ENCODE measurements at regions of chr4 and their contacts with region 1.

Region 1: GRCh38 chr4:39044364-39044955 is 12.3 kb upstream of the TMEM156 start:
- DNase-seq: peak; percentile 95
- H3K4me3 Mint-ChIP-seq: peak overlapping the region; percentile 72
- H3K27ac Mint-ChIP-seq: peak overlapping the region; percentile 73
- H3K4me1 Mint-ChIP-seq: peaks cover 33% of the 10 kb centered on the region
- H3K27me3 Mint-ChIP-seq: no peaks in the 10 kb centered on the region
- CTCF ChIP-seq: no peak

Region 2: DNA sequence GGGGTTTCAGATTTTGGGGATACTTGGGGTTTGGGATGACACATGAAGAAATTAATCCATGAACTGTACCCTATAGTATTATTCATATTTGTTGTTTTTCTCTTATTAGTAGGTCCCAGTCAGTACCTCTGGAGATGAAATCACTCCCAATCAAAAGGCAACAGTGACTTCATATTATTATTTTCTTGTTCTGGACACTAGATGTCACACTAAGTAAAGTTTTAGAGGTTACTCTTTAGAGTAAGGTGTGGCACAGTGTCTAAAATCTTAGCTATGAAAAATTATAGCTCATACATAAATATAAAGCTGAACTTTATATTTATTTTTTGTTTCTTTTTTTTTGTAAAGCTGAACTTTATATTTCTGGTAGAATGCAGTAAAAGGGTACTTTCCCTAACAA is 141.8 kb before region 1 on chr4:
- CTCF ChIA-PET with region 1: interaction called, 4 read pairs
- POLR2A ChIA-PET with region 1: interaction called, 10 read pairs
- intact Hi-C with region 1: loop called (anchors 5 kb)
- DNase-seq: peak; percentile 47
- H3K4me3 Mint-ChIP-seq: no peak overlapping the region
- H3K27ac Mint-ChIP-seq: no peak overlapping the region
- H3K4me1 Mint-ChIP-seq: no peaks in the 10 kb centered on the region
- H3K27me3 Mint-ChIP-seq: no peaks in the 10 kb centered on the region
- CTCF ChIP-seq: peak; percentile 55

Region 3: DNA sequence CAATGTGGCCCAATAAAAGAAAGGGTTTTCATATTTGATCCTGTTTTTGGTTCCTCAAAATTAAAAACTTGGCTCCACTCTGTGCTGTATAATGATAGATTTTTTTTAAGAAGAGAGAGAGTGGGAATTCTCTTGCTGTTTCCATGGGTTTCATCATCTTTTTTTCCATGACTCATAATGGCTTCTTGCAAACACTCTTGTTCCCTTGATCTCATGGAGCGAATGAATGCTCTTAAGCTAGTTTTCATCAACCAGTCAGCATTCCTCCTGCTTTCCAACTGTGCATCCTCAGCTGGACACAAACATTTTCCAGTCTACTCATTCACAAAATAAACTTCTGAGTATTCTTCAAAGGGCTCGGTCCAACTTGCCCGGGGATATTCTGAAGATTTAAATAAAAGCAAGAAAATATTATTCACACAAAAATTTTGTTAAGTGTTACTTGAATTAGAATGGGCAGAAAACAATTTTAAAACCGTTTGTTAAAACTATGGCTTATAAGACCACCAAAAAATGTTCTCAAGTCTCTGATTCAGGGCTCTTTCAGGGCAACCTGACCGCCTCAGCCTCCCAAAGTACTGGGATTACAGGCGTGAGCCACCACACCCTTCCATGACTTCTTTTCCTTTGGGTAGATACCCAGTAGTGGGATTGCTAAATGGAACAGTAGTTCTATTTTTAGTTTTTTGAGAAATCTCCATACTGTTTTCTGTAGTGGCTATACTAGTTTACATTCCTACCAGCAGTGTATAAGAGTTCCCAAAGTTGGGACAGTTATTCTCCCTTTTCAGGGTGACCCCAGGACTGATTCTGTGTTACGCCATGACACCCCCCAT is 77.0 kb before region 1 on chr4:
- CTCF ChIA-PET with region 1: interaction called, 3 read pairs
- POLR2A ChIA-PET with region 1: no interaction called
- intact Hi-C with region 1: loop called (anchors 5 kb)
- DNase-seq: peak; percentile 88
- H3K4me3 Mint-ChIP-seq: no peak overlapping the region
- H3K27ac Mint-ChIP-seq: peak overlapping the region; percentile 92
- H3K4me1 Mint-ChIP-seq: peaks cover 7% of the 10 kb centered on the region
- H3K27me3 Mint-ChIP-seq: no peaks in the 10 kb centered on the region
- CTCF ChIP-seq: no peak

Region 4: DNA sequence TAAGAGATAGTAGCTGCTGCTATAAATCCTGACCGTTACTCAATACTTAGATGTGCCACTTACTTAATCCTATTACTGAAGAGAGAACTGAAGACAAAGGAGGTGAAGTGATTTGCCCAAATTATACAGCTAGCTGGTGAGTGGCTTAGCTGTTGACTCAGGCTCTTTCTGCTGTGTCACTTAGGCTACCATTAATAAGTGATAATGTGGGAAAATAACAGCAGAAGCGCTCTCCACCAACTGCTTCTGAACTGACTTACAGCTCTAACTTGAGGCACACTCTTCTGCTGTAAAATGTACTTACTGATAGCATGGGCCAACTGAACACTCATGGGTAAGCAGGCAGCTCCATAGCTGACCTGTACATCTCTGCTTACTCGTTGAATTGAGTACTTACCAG is 10.0 kb after region 1 on chr4:
- CTCF ChIA-PET with region 1: interaction called, 3 read pairs
- POLR2A ChIA-PET with region 1: interaction called, 19 read pairs
- intact Hi-C with region 1: no loop called
- DNase-seq: no peak
- H3K4me3 Mint-ChIP-seq: no peak overlapping the region
- H3K27ac Mint-ChIP-seq: no peak overlapping the region
- H3K4me1 Mint-ChIP-seq: peaks cover 5% of the 10 kb centered on the region
- H3K27me3 Mint-ChIP-seq: no peaks in the 10 kb centered on the region
- CTCF ChIP-seq: no peak

Region 5: DNA sequence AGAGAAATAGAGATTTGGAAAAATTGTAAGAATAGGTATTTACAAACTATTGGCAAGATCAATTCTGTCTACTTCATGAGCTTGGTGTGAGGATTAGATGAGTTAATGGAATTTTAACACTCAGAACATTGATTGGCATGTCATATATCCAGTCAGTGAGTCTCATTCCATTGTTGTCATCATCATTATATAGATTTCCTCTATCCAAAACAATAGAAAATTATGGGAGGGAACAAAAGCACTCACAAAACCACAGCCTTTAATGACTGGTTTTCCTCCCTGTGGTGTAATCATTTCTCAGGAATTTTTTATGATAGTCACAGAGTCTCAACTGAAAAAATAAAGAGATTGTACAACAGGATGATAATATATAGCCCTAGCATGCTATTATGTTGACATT is 38.7 kb after region 1 on chr4:
- CTCF ChIA-PET with region 1: interaction called, 3 read pairs
- POLR2A ChIA-PET with region 1: interaction called, 38 read pairs
- intact Hi-C with region 1: loop called (anchors 5 kb)
- DNase-seq: peak; percentile 48
- H3K4me3 Mint-ChIP-seq: no peak overlapping the region
- H3K27ac Mint-ChIP-seq: no peak overlapping the region
- H3K4me1 Mint-ChIP-seq: peaks cover 22% of the 10 kb centered on the region
- H3K27me3 Mint-ChIP-seq: no peaks in the 10 kb centered on the region
- CTCF ChIP-seq: no peak

Measured in MCF 10A (cell line).